ENCODE measurements at regions of chrX and their contacts with region 1.

Region 1: DNA sequence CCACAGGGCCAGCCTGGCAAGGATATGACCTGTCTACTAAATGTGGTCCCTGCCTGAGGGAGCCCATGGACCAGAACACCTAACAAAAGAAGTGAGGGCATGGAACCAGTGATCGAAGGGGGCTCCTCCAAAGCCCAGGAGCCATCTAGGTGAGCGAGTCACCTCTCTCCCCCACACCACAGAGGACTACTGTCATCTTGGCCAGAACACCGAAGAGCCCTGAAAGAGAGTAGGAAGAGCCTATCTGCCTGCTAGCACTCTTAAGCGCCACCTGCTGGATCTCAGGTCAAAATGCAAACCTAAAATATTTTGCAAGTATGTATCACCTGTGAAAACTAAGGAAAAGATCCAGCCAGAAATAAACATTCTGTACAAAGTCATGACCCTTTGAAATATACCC is 137.9 kb upstream of the ZXDB start:
- DNase-seq: no peak
- H3K4me3 ChIP-seq: no peak overlapping the region
- H3K27ac ChIP-seq: no peak overlapping the region
- H3K4me1 ChIP-seq: no peaks in the 10 kb centered on the region
- H3K27me3 ChIP-seq: no peaks in the 10 kb centered on the region
- CTCF ChIP-seq: peak; percentile 42

Region 2: GRCh38 chrX:56920338-56920997 is 533.4 kb before region 1 on chrX:
- intact Hi-C with region 1: no loop called
- DNase-seq: no peak
- H3K4me3 ChIP-seq: no peak overlapping the region
- H3K27ac ChIP-seq: no peak overlapping the region
- H3K4me1 ChIP-seq: no peaks in the 10 kb centered on the region
- H3K27me3 ChIP-seq: no peaks in the 10 kb centered on the region
- CTCF ChIP-seq: no peak

Region 3: DNA sequence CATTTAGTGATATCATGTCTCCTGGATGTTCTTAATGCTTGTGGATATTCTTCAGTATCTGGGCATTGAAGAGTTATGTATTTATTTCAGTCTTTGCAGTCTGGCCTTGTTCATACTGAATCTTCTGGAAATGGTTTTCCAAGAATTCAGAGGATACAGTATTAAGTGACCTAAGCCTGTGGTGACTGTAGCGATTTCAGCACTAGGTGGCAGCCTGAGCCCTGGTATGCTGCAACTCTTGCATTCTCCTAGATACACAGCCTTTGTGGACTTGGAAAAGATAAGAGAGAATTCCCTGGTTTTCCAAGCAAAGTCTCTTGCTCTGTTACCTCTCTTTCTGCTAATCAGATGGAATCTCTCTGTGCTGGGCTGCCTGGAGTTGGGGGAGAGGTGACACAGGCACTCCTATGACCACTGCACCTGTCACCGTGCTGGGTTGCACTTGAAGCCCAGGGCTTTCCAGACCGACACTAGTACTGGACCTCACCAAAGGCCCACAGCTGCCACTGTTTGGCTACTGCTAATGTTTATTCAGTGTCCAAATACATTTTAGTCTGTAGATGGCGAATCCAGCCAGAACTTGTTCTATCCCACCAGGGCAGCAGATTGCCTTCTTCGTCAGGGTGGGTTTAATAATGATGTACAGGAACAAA is 297.4 kb before region 1 on chrX:
- intact Hi-C with region 1: loop called (anchors 10 kb)
- DNase-seq: peak; percentile 47
- H3K4me3 ChIP-seq: no peak overlapping the region
- H3K27ac ChIP-seq: no peak overlapping the region
- H3K4me1 ChIP-seq: no peaks in the 10 kb centered on the region
- H3K27me3 ChIP-seq: no peaks in the 10 kb centered on the region
- CTCF ChIP-seq: no peak

Region 4: GRCh38 chrX:57596109-57596870 is 142.4 kb after region 1 on chrX:
- intact Hi-C with region 1: no loop called
- DNase-seq: no peak
- H3K4me3 ChIP-seq: no peak overlapping the region
- H3K27ac ChIP-seq: no peak overlapping the region
- H3K4me1 ChIP-seq: no peaks in the 10 kb centered on the region
- H3K27me3 ChIP-seq: no peaks in the 10 kb centered on the region
- CTCF ChIP-seq: no peak

Measured in colonic mucosa (tissue), 4 donors.